ENCODE measurements at regions of chr1 and their contacts with region 1.

Region 1: DNA sequence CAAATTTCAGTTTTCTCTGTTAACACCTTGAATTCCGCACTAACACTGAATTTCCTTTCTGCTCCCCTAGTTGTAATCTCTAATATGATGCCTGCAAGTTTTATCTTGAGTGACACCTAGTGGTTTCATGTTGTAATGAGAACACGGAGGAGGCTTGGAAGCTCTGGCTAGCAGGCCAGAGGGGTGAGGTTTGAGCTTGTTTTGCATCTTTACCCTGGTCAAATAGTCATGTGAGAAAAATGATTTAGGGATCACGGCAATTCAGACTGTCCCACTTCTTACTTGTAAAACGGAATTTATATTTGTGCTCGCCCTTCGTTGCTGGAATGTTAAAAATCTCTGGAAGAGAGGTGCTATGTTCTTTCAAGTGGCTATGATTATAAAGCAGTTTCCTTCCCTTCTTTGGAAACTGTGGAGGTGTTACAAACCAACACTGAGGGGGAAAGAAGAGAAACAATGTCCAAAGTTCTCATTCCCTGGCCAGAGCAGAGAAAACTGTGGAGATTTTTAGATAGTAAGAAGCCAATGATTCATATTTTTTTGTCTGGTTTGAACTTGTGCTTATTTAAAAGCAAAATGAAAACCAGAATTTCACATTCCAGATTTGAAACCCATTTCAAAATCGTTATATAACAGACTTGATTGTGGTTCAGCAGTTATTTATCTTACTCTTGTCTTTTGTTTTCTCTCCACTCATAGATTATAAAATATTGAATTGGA is 5.3 kb upstream of the MROH9 start:
- DNase-seq: no peak
- H3K4me3 ChIP-seq: no peak overlapping the region
- H3K27ac ChIP-seq: peak overlapping the region in 3 of 4 donors; percentile 16 to 37 (median 18)
- H3K4me1 ChIP-seq: peaks cover 0 to 17% (median 8%) of the 10 kb centered on the region in 4 donors
- H3K27me3 ChIP-seq: no peaks in the 10 kb centered on the region
- CTCF ChIP-seq: peak; percentile 65 to 75 (median 71)
- EP300 ChIP-seq: no peak
- POLR2A ChIP-seq: no peak

Region 2: DNA sequence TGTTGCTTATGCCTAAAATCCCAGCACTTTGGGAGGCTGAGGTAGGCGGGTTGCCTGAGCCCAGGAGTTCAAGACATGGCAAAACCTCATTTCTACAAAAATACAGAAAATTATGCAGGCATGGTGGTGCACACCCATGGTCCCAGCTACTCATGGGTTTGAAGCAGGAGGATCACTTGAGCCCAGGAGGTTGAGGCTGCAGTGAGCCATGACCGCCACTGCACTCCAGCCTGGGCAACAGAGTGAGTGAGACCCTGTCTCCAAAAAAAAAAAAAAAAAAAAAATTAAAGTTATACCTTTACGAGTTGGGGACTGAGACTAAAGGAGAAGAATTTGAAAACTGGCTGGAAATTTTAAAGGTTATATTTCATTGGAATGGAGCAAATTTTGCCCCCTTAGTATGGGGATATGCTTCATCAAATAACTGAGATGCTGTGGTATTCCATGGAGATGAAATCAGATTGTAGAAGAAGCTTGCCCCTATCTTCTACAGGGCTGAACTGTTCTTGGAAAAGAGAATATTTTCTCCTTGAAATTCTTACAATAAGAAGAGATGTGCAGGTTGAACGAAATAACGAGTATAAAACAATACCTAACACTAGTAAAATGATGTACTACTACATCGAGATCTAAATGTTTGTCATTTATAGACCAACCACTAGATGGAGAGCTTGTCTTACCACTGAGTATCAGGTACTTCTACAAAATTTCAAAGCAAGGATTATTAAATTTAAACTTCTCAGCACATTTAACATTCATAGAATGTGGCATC is 1001.4 kb before region 1 on chr1:
- in situ Hi-C with region 1: loop called in 1 of 4 experiments (anchors 25 kb)
- intact Hi-C with region 1: no loop called
- DNase-seq: no peak
- H3K4me3 ChIP-seq: no peak overlapping the region
- H3K27ac ChIP-seq: no peak overlapping the region
- H3K4me1 ChIP-seq: peaks cover 0 to 21% (median 7%) of the 10 kb centered on the region in 4 donors
- H3K27me3 ChIP-seq: no peaks in the 10 kb centered on the region
- CTCF ChIP-seq: peak; percentile 51 to 70 (median 64)
- EP300 ChIP-seq: no peak
- POLR2A ChIP-seq: no peak

Region 3: DNA sequence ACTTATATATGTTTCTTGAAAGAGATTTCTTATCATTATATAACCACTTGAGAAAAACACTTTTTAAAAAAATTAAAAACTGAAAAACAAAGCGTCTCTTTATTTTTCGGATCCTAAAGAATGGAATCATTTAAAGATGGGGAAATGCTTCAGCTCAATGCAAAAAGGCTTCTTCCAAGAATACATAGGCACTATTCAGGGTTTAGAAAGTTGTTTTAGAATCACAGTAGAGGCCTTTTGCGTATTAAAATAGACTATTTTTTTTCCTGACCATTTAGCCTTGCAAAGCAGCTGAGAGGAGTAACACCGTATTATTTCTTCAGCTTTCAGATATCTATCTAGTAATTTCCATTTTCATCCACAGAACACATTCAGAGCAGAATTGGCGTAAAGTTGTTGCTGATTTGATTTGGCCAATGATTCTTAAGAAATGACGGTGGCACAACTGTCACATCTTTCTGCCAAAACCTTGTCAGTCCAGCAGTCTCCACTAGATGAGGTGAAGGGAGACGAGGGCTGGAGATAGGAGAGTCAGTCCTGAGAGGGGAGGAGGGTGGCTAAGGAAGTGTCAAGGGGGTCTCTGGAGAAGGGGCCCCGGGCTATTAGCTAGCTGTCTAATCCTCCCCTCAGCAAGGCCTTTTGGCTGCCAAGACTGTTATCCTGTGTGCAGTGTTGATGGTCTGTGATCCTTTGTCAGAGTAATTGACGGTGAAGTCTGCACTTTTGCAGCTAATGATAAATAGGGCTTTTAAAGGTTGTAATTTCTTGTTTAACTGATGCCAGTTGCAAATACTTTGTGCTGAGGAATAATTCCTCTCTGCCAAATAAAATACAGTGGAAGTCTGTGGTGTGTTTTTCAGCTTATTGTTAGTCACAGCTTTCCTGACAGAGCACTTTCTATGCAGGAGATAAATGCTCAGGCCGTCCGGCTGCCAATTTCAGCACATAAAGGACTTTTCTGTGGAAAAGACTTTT is 231.4 kb before region 1 on chr1:
- in situ Hi-C with region 1: loop called in 2 of 4 experiments (anchors 10 to 25 kb)
- intact Hi-C with region 1: no loop called
- DNase-seq: no peak
- H3K4me3 ChIP-seq: no peak overlapping the region
- H3K27ac ChIP-seq: peak overlapping the region in 2 of 4 donors; percentile 10 to 29
- H3K4me1 ChIP-seq: no peaks in the 10 kb centered on the region
- H3K27me3 ChIP-seq: no peaks in the 10 kb centered on the region
- CTCF ChIP-seq: no peak
- EP300 ChIP-seq: no peak
- POLR2A ChIP-seq: no peak